Activated CD4-positive, alpha-beta T cell treated with anti-CD3 and anti-CD28 coated beads for 36 hours (primary cell): ENCODE measurements at regions of chr22 and their contacts with region 1.

Region 1: DNA sequence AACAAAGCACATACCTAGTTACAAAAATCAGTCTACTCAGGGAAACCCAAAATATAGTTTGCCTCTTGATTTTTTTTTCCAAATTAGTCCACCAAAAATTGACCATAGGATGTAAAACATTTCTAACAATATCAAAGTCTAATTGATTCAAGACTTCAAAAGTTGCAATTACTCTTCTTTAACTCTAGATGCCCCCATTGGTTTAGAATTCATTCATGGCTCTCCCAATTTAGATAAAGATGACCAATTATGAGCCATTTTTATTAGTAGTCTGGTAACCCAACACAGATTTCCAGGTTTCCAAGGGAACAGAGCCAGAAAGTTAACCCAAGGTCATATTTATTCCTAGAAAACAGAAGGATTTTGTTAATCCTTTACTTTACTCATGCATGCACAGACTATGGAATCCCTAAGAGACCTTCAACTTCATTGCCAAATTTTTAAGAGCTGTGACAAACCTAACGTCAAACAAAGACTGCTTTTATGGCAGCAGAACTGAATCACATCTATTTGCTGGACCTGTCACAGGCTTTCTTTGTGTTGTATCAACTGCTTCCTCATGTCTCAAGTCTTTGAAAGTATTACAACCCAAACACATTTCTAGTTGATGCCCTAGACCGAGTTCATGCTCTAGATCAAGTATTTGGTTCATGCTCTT is 55.3 kb downstream of the C22orf42 start:
- DNase-seq: no peak
- ATAC-seq: no peak
- H3K4me3 Mint-ChIP-seq: no peak overlapping the region
- H3K27ac Mint-ChIP-seq: no peak overlapping the region
- H3K4me1 Mint-ChIP-seq: no peaks in the 10 kb centered on the region
- H3K27me3 Mint-ChIP-seq: peaks cover 16% of the 10 kb centered on the region

Region 2: DNA sequence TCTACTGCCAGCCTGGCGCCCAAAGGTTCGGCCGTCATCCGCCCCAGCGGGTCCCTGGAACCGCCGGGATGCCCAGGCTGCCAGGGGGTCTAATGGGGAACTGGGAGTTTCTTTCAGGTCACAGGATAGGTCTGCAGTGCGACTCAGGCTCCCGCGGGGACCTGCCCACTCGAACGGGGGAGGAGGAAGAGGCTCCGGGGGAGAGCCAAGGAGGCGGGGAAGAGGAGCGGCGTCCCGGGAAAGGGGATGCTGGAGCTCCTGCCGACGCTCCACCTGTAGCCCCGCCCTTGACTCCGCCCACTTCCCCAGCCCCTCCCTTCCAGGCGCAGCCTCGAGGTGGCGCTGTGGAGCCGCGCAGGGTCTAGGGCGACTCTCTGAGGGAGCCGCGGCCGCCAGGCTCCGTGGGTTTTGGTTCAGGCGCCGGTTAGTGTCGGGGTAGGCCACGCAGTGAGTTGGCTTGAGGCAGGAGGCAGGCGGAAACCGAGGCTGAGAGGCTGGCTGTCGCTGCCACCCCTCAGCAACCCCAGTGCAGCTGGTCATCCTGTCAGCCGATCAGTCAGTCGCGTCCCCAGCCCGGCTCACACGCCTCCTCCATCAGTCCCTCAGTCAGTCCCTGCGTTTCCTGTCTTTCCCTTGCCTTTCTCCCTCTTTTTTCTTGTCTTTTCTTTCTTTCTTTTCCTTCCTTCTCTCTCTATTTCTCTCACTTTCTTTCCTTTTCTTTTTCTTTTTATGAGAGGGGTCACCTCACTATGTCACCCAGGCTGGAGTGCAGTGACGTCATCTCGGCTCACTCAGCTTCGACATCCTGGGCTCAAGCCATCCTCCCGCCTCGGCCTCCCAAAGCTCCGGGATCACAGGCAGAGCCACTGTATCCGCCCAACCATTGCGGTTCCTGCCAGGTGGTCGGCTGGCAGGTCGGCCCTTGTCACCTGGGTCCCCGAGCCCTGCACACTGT is 133.0 kb before region 1 on chr22:
- CTCF ChIA-PET with region 1: no interaction called
- POLR2A ChIA-PET with region 1: no interaction called
- intact Hi-C with region 1: no loop called
- DNase-seq: peak; percentile 93
- ATAC-seq: peak; percentile 95
- H3K4me3 Mint-ChIP-seq: peak overlapping the region; percentile 57
- H3K27ac Mint-ChIP-seq: peak overlapping the region; percentile 37
- H3K4me1 Mint-ChIP-seq: peaks cover 11% of the 10 kb centered on the region
- H3K27me3 Mint-ChIP-seq: no peaks in the 10 kb centered on the region

Region 3: GRCh38 chr22:32202539-32203180 is 98.9 kb after region 1 on chr22:
- CTCF ChIA-PET with region 1: no interaction called
- POLR2A ChIA-PET with region 1: no interaction called
- intact Hi-C with region 1: loop called in 1 of 2 experiments (anchors 10 kb)
- DNase-seq: peak; percentile 59
- ATAC-seq: peak; percentile 55
- H3K4me3 Mint-ChIP-seq: peak overlapping the region; percentile 63
- H3K27ac Mint-ChIP-seq: no peak overlapping the region
- H3K4me1 Mint-ChIP-seq: peaks cover 21% of the 10 kb centered on the region
- H3K27me3 Mint-ChIP-seq: peaks cover 18% of the 10 kb centered on the region

Region 4: DNA sequence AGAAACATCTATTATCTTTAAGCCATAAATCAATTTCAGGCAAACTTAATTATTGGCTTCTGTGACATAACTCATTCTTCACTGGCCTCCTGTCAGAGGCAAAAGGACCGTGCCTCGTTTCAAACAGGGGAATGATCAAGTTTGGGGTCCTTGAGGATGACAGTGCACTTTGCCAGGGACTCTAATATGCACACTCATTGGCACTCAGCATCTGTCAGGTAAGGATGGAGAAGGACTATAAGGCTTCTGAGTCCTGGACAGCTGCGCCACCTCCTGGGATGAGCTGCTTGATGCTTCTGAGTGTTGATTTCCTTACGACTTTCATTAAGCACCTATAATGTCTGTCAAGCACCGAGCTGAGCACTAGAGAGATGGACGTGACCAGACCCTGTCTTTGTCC is 340.3 kb after region 1 on chr22:
- CTCF ChIA-PET with region 1: no interaction called
- POLR2A ChIA-PET with region 1: no interaction called
- intact Hi-C with region 1: loop called in 1 of 2 experiments (anchors 10 kb)
- DNase-seq: peak; percentile 42
- ATAC-seq: no peak
- H3K4me3 Mint-ChIP-seq: no peak overlapping the region
- H3K27ac Mint-ChIP-seq: no peak overlapping the region
- H3K4me1 Mint-ChIP-seq: no peaks in the 10 kb centered on the region
- H3K27me3 Mint-ChIP-seq: peaks cover 3% of the 10 kb centered on the region

Region 5: GRCh38 chr22:32745251-32745995 is 641.6 kb after region 1 on chr22:
- CTCF ChIA-PET with region 1: no interaction called
- POLR2A ChIA-PET with region 1: no interaction called
- intact Hi-C with region 1: no loop called
- DNase-seq: no peak
- ATAC-seq: no peak
- H3K4me3 Mint-ChIP-seq: no peak overlapping the region
- H3K27ac Mint-ChIP-seq: no peak overlapping the region
- H3K4me1 Mint-ChIP-seq: no peaks in the 10 kb centered on the region
- H3K27me3 Mint-ChIP-seq: peaks cover 11% of the 10 kb centered on the region